Activated CD8-positive, alpha-beta memory T cell treated with anti-CD3 and anti-CD28 coated beads, Interleukin-2, amount 10 ng/mL, durations not matched to agents 7 days and 5 days (primary cell): ENCODE measurements at regions of chr5 and their contacts with region 1.

Region 1: DNA sequence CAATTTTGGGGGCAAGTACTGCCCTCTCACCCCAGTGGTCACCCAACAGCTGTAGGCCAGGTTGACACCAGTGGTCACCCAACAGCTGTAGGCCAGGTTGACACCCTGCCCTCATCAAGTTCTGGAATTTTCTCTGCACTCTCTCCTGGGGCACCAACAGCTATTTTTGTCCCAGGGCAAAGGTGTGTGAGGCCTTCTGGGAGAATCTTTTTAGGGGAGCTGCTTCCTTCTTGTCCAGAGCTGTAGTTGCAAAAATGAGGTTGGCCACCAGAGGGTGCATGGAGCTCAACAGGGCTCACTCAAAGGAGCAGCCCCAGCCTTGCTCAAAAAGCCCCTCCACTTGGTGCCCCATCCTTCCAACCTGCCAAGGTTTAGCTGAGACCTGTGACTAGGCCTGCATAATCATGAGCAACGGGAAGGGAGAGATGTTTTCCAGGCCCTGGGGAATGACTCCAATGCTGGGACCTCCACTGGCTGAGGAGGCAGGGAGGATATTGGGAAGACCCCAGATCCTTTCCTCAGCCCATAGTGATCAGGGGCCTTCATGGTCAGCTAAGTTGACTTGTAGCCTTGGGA is 10.6 kb upstream of the P4HA2 start:
- DNase-seq: peak; percentile 86
- ATAC-seq: peak; percentile 83
- H3K4me3 Mint-ChIP-seq: no peak overlapping the region
- H3K27ac Mint-ChIP-seq: no peak overlapping the region
- H3K4me1 Mint-ChIP-seq: peaks cover 2% of the 10 kb centered on the region
- H3K27me3 Mint-ChIP-seq: peaks cover 3% of the 10 kb centered on the region

Region 2: DNA sequence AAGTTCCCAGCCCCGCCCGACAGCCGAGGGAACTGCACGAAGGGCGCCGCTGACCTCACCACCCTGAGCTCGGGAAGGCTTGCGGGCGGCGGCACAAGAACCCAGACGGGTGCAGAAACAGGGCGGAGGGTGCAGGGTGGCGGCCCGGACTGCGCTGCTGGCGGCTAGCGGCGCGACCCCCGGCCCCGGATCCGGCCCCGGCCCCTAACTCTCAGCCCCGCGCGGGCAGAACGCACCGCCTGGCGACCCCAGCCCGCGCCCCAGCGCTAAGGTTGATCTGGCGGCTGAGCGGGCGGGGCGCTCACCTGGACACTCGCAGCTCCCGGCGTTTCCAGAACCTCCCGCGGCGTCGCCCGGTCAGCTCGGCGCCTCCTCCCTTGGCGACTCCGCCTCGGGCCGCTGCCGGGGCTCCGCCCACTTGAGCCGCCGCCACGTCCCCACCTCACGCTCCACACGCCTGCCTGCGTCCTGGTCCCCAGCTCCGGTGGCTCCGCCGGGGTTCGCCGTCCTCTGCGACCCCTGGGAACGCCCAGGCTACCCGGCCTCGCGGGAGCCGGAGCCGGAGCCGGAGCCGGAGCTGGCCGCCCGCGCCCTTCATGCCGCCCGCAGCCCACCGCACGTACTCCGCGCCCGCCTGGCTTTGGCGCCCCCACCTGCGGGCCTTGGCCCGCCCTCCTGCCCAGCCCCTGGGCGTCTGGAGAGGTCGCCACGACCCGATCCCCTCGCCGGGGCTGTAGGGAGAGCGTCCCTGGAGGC is 10.6 kb before region 1 on chr5 and contains the start of gene P4HA2:
- CTCF ChIA-PET with region 1: interaction called, 17 read pairs
- DNase-seq: peak; percentile 66
- ATAC-seq: peak; percentile 95
- H3K4me3 Mint-ChIP-seq: peak within 1 kb of the TSS; percentile 49
- H3K27ac Mint-ChIP-seq: no peak within 1 kb of the TSS
- H3K4me1 Mint-ChIP-seq: peaks cover 25% of the 10 kb centered on the region
- H3K27me3 Mint-ChIP-seq: peaks cover 24% of the 10 kb centered on the region
- total RNA-seq, gene P4HA2: 8.3 to 19.4 TPM

Region 3: DNA sequence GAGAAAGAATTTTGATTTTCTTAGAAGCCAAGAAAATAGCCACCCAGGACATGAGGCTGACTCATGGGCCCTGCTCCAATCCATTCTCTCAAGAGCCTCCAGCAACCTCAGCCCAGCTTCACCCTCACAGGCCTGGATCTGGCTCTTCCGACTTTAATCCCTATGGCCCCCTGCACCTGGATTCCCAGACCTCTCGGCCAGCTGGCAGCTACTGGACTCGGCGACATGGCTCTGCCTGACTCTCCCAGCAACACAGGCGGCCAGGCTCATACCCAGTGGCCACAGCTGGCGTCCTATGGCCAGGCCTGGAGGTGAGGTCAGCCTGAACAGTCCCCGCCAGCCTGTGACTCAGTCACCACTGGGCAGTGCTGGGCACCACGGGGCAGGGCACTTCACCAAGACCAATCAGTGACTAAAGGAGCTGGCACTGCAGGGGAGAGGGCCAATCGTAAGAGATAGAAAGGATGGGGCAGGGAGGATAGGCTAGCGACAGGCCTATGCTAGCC is 13.0 kb after region 1 on chr5:
- CTCF ChIA-PET with region 1: interaction called, 40 read pairs
- DNase-seq: no peak
- ATAC-seq: no peak
- H3K4me3 Mint-ChIP-seq: no peak overlapping the region
- H3K27ac Mint-ChIP-seq: no peak overlapping the region
- H3K4me1 Mint-ChIP-seq: no peaks in the 10 kb centered on the region
- H3K27me3 Mint-ChIP-seq: peaks cover 22% of the 10 kb centered on the region

Region 4: DNA sequence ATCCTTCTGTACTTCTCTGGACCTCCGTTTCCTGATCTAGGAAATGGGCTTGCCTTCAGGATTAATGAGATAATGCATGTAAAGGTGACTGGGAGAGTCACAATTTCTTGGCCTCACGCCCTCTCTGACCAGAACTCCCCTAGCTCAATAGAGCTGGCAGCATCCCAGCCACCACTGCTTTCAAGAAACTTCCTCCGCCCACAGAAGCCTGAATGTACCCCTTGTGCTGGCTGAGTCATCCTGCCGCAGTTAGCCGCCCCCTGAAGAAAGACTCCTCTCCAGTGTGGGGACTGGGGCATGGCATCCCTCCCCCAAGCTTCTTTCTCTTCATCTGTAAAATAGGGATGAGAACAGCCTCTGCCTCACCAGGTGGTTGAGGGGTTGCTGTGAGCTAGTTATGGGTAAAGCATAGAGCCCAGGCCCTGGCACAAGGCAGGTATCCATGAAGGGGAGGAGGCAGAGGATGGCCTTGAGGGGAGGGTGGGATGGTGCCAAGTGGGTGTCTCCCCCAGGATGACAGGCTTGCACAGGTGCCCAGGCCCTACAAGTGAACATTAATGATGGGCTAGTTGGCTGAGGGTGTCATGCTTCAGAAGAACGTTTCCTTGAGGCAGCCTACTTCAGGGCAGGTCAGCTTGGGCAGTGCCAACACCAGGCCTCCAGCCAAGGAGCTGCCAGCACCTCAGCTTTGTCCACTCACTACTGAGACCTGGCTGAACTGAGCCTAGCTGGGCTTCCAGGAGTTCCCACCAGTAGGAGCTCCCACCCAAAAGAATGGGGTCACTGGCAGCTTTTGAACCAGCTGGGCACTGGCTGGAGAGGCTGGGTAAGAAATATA is 22.7 kb after region 1 on chr5:
- CTCF ChIA-PET with region 1: interaction called, 10 read pairs
- DNase-seq: peak; percentile 41
- ATAC-seq: peak; percentile 21
- H3K4me3 Mint-ChIP-seq: no peak overlapping the region
- H3K27ac Mint-ChIP-seq: no peak overlapping the region
- H3K4me1 Mint-ChIP-seq: peaks cover 20% of the 10 kb centered on the region
- H3K27me3 Mint-ChIP-seq: peaks cover 13% of the 10 kb centered on the region

Region 5: GRCh38 chr5:132369474-132370180 is 131.4 kb after region 1 on chr5 and contains the start of gene SLC22A5:
- CTCF ChIA-PET with region 1: interaction called, 18 read pairs
- DNase-seq: peak; percentile 73
- ATAC-seq: peak; percentile 97
- H3K4me3 Mint-ChIP-seq: peak within 1 kb of the TSS; percentile 75
- H3K27ac Mint-ChIP-seq: peak within 1 kb of the TSS; percentile 52
- H3K4me1 Mint-ChIP-seq: peaks cover 20% of the 10 kb centered on the region
- H3K27me3 Mint-ChIP-seq: no peaks in the 10 kb centered on the region
- total RNA-seq, gene SLC22A5: 3.9 to 4.5 TPM

Region 6: GRCh38 chr5:132446669-132447068 is 208.4 kb after region 1 on chr5:
- CTCF ChIA-PET with region 1: no interaction called
- DNase-seq: no peak
- ATAC-seq: no peak
- H3K4me3 Mint-ChIP-seq: no peak overlapping the region
- H3K27ac Mint-ChIP-seq: no peak overlapping the region
- H3K4me1 Mint-ChIP-seq: peaks cover 54% of the 10 kb centered on the region
- H3K27me3 Mint-ChIP-seq: no peaks in the 10 kb centered on the region